Activated T-helper 2 cell treated with anti-CD3 and anti-CD28 coated beads, Interferon-gamma antibody, Interleukin-2, Interleukin-4, amounts not matched to agents 10 μg/mL and 5 μg/mL and 100 μg/mL, durations not matched to agents 14 hours and 24 hours and 36 hours (primary cell): ENCODE measurements at regions of chr22 and their contacts with region 1.

Region 1: DNA sequence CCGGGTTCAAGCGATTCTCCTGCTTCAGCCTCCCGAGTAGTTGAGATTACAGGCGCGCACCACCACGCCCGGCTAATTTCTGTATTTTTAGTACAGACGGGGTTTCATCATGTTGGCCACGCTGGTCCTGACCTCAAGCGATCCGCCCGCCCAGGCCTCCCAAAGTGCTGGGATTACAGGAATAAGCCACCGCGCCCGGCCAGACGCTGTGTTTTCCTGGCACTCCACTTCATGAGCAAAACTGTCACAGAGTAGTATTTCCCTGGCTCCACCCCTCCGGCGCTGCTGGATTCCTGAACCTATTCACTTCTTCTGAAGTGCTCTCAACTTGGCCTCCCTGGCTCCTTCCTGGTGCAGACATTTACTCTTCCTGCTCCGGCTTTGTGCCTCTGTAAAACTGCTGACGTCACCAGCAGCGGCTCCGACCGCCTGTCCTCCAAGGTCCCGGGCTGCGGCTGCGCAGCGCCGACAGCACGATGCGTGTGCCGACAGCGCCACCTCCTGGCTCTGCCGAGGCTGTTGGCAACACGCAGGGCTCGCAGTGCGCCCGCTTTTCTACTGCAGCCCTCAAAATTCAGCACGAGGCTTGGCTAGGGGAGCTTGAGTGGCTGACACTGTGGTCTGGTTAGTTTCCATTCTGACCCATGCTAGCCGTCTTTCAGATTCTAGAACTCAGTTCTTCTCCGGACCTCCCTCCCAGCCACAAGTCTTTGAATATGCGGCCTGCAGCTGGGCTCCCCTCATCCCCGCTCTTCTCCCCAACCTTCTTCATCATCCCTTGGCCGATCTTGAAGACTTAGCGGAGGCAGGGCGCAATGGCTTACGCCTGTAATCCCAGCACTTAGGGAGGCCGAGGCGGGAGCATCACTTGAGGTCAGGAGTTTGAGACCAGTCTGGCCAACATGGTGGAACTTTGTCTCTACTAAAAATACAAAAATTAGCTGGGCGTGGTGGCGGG is 36.6 kb downstream of the APOL3 start:
- DNase-seq: peak; percentile 90
- H3K4me3 Mint-ChIP-seq: peak overlapping the region; percentile 32
- H3K27ac Mint-ChIP-seq: peak overlapping the region; percentile 81
- H3K4me1 Mint-ChIP-seq: peaks cover 7% of the 10 kb centered on the region
- H3K27me3 Mint-ChIP-seq: peaks cover 13% of the 10 kb centered on the region

Region 2: DNA sequence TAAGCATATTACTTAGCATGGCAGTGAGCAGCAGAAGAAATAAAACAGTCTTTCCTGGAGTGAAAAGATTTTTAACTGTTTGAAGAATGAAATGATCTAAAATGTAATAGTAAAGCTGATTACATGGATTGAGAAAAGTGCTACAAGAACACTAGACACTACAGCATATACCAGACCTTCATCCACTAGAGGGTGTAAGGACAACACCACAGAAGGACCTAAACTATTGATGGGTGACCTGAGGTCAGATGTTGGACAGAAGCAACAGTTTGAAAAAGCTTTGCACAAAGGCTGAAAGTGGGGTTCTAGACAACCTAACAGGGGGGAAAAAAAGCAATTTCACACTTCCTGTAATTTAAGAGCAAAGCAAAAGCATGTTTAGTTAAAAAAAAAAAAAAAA is 193.0 kb before region 1 on chr22:
- intact Hi-C with region 1: loop called (anchors 5 kb)
- DNase-seq: no peak
- H3K4me3 Mint-ChIP-seq: no peak overlapping the region
- H3K27ac Mint-ChIP-seq: no peak overlapping the region
- H3K4me1 Mint-ChIP-seq: no peaks in the 10 kb centered on the region
- H3K27me3 Mint-ChIP-seq: peaks cover 11% of the 10 kb centered on the region

Region 3: GRCh38 chr22:36065775-36066559 is 58.0 kb before region 1 on chr22:
- intact Hi-C with region 1: loop called (anchors 2 kb)
- DNase-seq: peak; percentile 59
- H3K4me3 Mint-ChIP-seq: peak overlapping the region; percentile 80
- H3K27ac Mint-ChIP-seq: peak overlapping the region; percentile 57
- H3K4me1 Mint-ChIP-seq: peaks cover 6% of the 10 kb centered on the region
- H3K27me3 Mint-ChIP-seq: peaks cover 6% of the 10 kb centered on the region

Region 4: DNA sequence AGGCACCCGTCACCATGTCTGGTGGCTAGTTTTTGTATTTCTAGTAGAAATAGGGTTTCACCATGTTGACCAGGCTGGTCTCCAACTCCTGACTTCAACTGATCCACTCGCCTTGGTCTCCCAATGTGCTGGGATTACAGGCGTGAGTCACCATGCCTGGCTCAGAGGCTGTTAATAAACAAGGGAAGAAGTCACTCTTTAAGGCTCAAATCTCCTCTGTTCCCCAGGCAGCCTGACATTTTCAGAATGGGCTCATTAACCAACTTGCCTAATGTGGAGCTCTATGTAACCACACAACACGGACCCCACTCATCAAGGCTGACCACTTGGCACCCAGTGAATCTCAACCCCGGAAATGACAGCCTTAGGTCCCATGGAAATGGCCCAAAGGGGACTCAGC is 12.5 kb after region 1 on chr22:
- intact Hi-C with region 1: no loop called
- DNase-seq: no peak
- H3K4me3 Mint-ChIP-seq: no peak overlapping the region
- H3K27ac Mint-ChIP-seq: no peak overlapping the region
- H3K4me1 Mint-ChIP-seq: peaks cover 8% of the 10 kb centered on the region
- H3K27me3 Mint-ChIP-seq: no peaks in the 10 kb centered on the region

Region 5: GRCh38 chr22:36311386-36312358 is 187.7 kb after region 1 on chr22:
- intact Hi-C with region 1: no loop called
- DNase-seq: no peak
- H3K4me3 Mint-ChIP-seq: no peak overlapping the region
- H3K27ac Mint-ChIP-seq: no peak overlapping the region
- H3K4me1 Mint-ChIP-seq: no peaks in the 10 kb centered on the region
- H3K27me3 Mint-ChIP-seq: no peaks in the 10 kb centered on the region